CD8-positive, alpha-beta T cell (primary cell): ENCODE measurements at regions of chr17 and their contacts with region 1.

Region 1: DNA sequence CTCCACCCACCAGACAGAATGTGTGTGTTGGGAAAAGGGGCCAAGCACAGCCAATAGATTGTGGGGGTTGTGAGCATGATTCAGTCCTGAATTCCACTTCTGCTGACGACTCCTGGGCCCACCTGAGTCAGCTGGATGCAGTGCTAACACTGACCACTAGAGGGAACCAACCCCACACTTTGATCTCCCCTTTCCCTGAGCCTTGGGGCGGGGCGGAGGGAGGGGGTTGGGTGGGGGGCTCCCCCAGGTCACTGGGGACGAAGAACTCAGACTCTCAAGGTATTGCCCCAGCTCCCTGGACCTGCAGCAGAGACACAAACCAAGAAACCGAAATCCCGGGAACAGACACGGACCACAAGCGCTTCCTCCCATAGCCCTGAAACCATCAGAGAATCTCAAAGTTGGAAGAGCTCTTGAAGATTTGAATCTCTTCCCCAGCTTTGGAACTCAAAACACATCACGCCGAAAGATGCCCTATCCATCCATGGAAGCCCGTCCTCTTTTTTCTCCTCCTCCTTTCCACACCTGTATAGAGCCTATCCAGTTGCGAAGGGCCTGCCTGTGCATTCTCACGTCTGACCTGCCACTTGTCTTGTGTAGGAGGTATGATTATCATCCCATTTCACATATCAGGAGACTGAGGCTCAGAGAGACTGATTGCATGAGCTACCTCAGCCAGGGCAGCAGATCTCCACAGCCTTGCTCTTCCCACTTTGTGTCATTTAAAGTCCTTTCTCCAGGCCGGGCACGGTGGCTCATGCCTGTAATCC is 784 bp upstream of the CSHL1 start:
- DNase-seq: peak; percentile 35 to 78 (median 72)
- ATAC-seq: peak; percentile 94
- H3K4me3 ChIP-seq: no peak overlapping the region
- H3K4me3 Mint-ChIP-seq: no peak overlapping the region
- H3K27ac ChIP-seq: no peak overlapping the region
- H3K27ac Mint-ChIP-seq: no peak overlapping the region
- H3K4me1 ChIP-seq: no peaks in the 10 kb centered on the region
- H3K4me1 Mint-ChIP-seq: peaks cover 2% of the 10 kb centered on the region
- H3K27me3 ChIP-seq: no peaks in the 10 kb centered on the region
- H3K27me3 Mint-ChIP-seq: peaks cover 4% of the 10 kb centered on the region
- CTCF ChIP-seq: peak; percentile 77

Region 2: GRCh38 chr17:63842540-63843386 is 69.1 kb before region 1 on chr17 and contains the start of gene SMARCD2:
- CTCF ChIA-PET with region 1: no interaction called
- POLR2A ChIA-PET with region 1: no interaction called
- intact Hi-C with region 1: no loop called
- DNase-seq: peak; percentile 99
- ATAC-seq: peak; percentile 91
- H3K4me3 ChIP-seq: peak within 1 kb of the TSS; percentile 86 to 95
- H3K4me3 Mint-ChIP-seq: peak within 1 kb of the TSS; percentile 92
- H3K27ac ChIP-seq: peak within 1 kb of the TSS; percentile 88 to 95
- H3K27ac Mint-ChIP-seq: peak within 1 kb of the TSS; percentile 92
- H3K4me1 ChIP-seq: peaks cover 43% of the 10 kb centered on the region
- H3K4me1 Mint-ChIP-seq: peaks cover 30% of the 10 kb centered on the region
- H3K27me3 ChIP-seq: no peaks in the 10 kb centered on the region
- H3K27me3 Mint-ChIP-seq: no peaks in the 10 kb centered on the region
- CTCF ChIP-seq: no peak
- total RNA-seq, gene SMARCD2: 121 TPM

Region 3: GRCh38 chr17:63881876-63882601 is 29.8 kb before region 1 on chr17 and contains the start of gene GH2:
- CTCF ChIA-PET with region 1: no interaction called
- POLR2A ChIA-PET with region 1: no interaction called
- intact Hi-C with region 1: no loop called
- DNase-seq: peak; percentile 28 to 76 (median 60)
- ATAC-seq: peak; percentile 99
- H3K4me3 ChIP-seq: no peak within 1 kb of the TSS
- H3K4me3 Mint-ChIP-seq: no peak within 1 kb of the TSS
- H3K27ac ChIP-seq: no peak within 1 kb of the TSS
- H3K27ac Mint-ChIP-seq: no peak within 1 kb of the TSS
- H3K4me1 ChIP-seq: no peaks in the 10 kb centered on the region
- H3K4me1 Mint-ChIP-seq: peaks cover 4% of the 10 kb centered on the region
- H3K27me3 ChIP-seq: no peaks in the 10 kb centered on the region
- H3K27me3 Mint-ChIP-seq: peaks cover 2% of the 10 kb centered on the region
- CTCF ChIP-seq: peak; percentile 63
- total RNA-seq, gene GH2: not detected

Region 4: GRCh38 chr17:63931099-63931561 is 19.3 kb after region 1 on chr17:
- CTCF ChIA-PET with region 1: interaction called, 28 read pairs
- POLR2A ChIA-PET with region 1: no interaction called
- intact Hi-C with region 1: no loop called
- DNase-seq: peak in 8 of 9 experiments; percentile 53 to 79 (median 66)
- ATAC-seq: peak; percentile 81
- H3K4me3 ChIP-seq: peak overlapping the region; percentile 48 to 58
- H3K4me3 Mint-ChIP-seq: peak overlapping the region; percentile 93
- H3K27ac ChIP-seq: peak overlapping the region; percentile 36 to 50
- H3K27ac Mint-ChIP-seq: peak overlapping the region; percentile 94
- H3K4me1 ChIP-seq: peaks cover 20% of the 10 kb centered on the region
- H3K4me1 Mint-ChIP-seq: peaks cover 27% of the 10 kb centered on the region
- H3K27me3 ChIP-seq: no peaks in the 10 kb centered on the region
- H3K27me3 Mint-ChIP-seq: no peaks in the 10 kb centered on the region
- CTCF ChIP-seq: no peak

Region 5: GRCh38 chr17:63984651-63985386 is 73.0 kb after region 1 on chr17:
- CTCF ChIA-PET with region 1: interaction called, 20 read pairs
- POLR2A ChIA-PET with region 1: no interaction called
- intact Hi-C with region 1: no loop called
- DNase-seq: peak in 7 of 9 experiments; percentile 29 to 85 (median 65)
- ATAC-seq: peak; percentile 94
- H3K4me3 ChIP-seq: no peak overlapping the region
- H3K4me3 Mint-ChIP-seq: no peak overlapping the region
- H3K27ac ChIP-seq: peak overlapping the region in 1 of 2 experiments; percentile 52
- H3K27ac Mint-ChIP-seq: peak overlapping the region; percentile 33
- H3K4me1 ChIP-seq: peaks cover 7% of the 10 kb centered on the region
- H3K4me1 Mint-ChIP-seq: peaks cover 21% of the 10 kb centered on the region
- H3K27me3 ChIP-seq: no peaks in the 10 kb centered on the region
- H3K27me3 Mint-ChIP-seq: no peaks in the 10 kb centered on the region
- CTCF ChIP-seq: no peak

Region 6: GRCh38 chr17:64369007-64369893 is 457.4 kb after region 1 on chr17:
- CTCF ChIA-PET with region 1: no interaction called
- POLR2A ChIA-PET with region 1: no interaction called
- intact Hi-C with region 1: no loop called
- DNase-seq: no peak
- ATAC-seq: peak; percentile 26
- H3K4me3 ChIP-seq: no peak overlapping the region
- H3K4me3 Mint-ChIP-seq: no peak overlapping the region
- H3K27ac ChIP-seq: no peak overlapping the region
- H3K27ac Mint-ChIP-seq: peak overlapping the region; percentile 78
- H3K4me1 ChIP-seq: peaks cover 9% of the 10 kb centered on the region
- H3K4me1 Mint-ChIP-seq: peaks cover 30% of the 10 kb centered on the region
- H3K27me3 ChIP-seq: no peaks in the 10 kb centered on the region
- H3K27me3 Mint-ChIP-seq: no peaks in the 10 kb centered on the region
- CTCF ChIP-seq: no peak